ENCODE measurements at regions of chr7 and their contacts with region 1.

Region 1: GRCh38 chr7:14125998-14126397 is 136.5 kb upstream of the ETV1 start:
- DNase-seq: no peak
- H3K4me3 ChIP-seq: no peak overlapping the region
- H3K27ac ChIP-seq: no peak overlapping the region
- H3K4me1 ChIP-seq: no peaks in the 10 kb centered on the region
- H3K27me3 ChIP-seq: no peaks in the 10 kb centered on the region
- CTCF ChIP-seq: no peak

Region 2: GRCh38 chr7:14115701-14116100 is 10.3 kb before region 1 on chr7:
- CTCF ChIA-PET with region 1: no interaction called
- POLR2A ChIA-PET with region 1: no interaction called
- intact Hi-C with region 1: loop called (anchors 1 kb)
- DNase-seq: no peak
- H3K4me3 ChIP-seq: no peak overlapping the region
- H3K27ac ChIP-seq: no peak overlapping the region
- H3K4me1 ChIP-seq: no peaks in the 10 kb centered on the region
- H3K27me3 ChIP-seq: no peaks in the 10 kb centered on the region
- CTCF ChIP-seq: no peak

Region 3: DNA sequence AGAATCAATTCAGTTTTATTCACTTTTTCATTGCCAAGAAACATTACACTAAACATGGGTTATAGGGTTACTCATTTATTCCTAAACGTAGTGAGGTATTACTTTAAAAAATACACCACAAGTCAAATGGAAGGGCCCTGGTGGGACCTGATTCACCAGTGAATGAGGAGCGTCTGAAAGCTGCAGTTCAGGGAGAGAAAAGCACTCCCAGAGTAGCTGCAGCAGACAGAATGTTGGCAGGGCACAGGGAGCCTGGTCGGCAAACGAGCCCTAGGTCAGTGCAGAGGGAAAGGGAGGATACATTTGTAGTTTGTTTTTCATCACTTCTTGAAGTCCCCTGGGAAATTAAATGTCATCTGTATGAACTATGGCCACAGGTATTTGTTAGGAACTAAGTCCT is 225.2 kb after region 1 on chr7:
- CTCF ChIA-PET with region 1: no interaction called
- POLR2A ChIA-PET with region 1: no interaction called
- intact Hi-C with region 1: no loop called
- DNase-seq: no peak
- H3K4me3 ChIP-seq: no peak overlapping the region
- H3K27ac ChIP-seq: no peak overlapping the region
- H3K4me1 ChIP-seq: no peaks in the 10 kb centered on the region
- H3K27me3 ChIP-seq: peaks cover 3% of the 10 kb centered on the region
- CTCF ChIP-seq: no peak